IMR-90 (cell line): ENCODE measurements at regions of chr2 and their contacts with region 1.

Region 1: GRCh38 chr2:46621499-46621898 is 142.1 kb downstream of the TMEM247 start:
- DNase-seq: no peak
- ATAC-seq: no peak
- H3K4me3 ChIP-seq: no peak overlapping the region
- H3K27ac ChIP-seq: no peak overlapping the region
- H3K4me1 ChIP-seq: no peaks in the 10 kb centered on the region
- H3K27me3 ChIP-seq: no peaks in the 10 kb centered on the region
- CTCF ChIP-seq: no peak
- POLR2A ChIP-seq: no peak
- RAD21 ChIP-seq: no peak

Region 2: GRCh38 chr2:47309952-47310800 is 688.7 kb after region 1 on chr2:
- CTCF ChIA-PET with region 1: no interaction called
- POLR2A ChIA-PET with region 1: interaction called, 15 read pairs
- dilution Hi-C with region 1: no loop called
- in situ Hi-C with region 1: no loop called
- intact Hi-C with region 1: no loop called
- DNase-seq: peak; percentile 51
- ATAC-seq: peak; percentile 40; the same call in 1 of the 2 replicates
- H3K4me3 ChIP-seq: no peak overlapping the region
- H3K27ac ChIP-seq: no peak overlapping the region
- H3K4me1 ChIP-seq: peaks cover 16% of the 10 kb centered on the region
- H3K27me3 ChIP-seq: no peaks in the 10 kb centered on the region
- CTCF ChIP-seq: no peak
- POLR2A ChIP-seq: no peak
- RAD21 ChIP-seq: no peak